GM23248 (cell line): ENCODE measurements at regions of chr20 and their contacts with region 1.

Region 1: DNA sequence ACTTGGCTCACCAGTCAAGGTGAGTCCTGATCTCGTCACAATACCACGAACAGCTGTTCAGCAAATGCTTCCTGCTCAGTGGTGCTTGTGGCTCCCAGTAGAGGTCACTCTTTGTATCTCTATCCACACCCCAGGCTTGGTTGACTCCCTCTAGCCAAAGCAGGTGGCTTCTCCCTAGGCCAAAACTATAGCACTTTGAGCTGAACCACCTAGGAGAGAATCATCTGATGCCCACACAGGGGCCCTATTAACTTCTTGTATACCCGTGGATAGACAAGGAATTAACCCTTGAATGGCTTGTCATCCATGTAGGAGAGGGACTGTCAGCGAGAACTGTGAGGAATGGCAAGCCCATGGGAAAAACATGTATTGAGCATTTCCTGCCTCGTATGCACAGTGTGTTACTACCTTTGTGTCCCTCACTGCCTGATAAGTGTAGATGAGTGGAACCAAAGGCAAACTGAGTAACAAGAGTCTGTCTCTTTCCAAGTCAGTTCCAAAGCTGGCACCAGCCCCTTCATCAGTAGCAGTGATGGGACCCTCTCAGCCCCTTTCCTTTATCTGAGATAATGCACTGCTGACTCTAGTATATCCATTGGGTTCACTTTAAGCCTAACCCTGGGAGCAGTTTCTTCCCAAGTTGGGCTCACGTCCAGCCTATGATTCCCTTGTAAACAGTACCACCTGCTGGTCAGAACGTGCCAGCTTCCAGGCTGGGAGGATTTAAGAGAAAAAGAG is 42.5 kb downstream of the EIF2S2 start:
- DNase-seq: peak; percentile 88
- H3K4me3 ChIP-seq: no peak overlapping the region
- H3K27ac ChIP-seq: no peak overlapping the region
- H3K4me1 ChIP-seq: peaks cover 28% of the 10 kb centered on the region
- H3K27me3 ChIP-seq: no peaks in the 10 kb centered on the region

Region 2: GRCh38 chr20:33862709-33863403 is 206.7 kb before region 1 on chr20:
- in situ Hi-C with region 1: loop called (anchors 10 kb)
- DNase-seq: peak; percentile 74
- H3K4me3 ChIP-seq: peak overlapping the region; percentile 51; the same call in 1 of the 2 replicates
- H3K27ac ChIP-seq: no peak overlapping the region
- H3K4me1 ChIP-seq: no peaks in the 10 kb centered on the region
- H3K27me3 ChIP-seq: no peaks in the 10 kb centered on the region